Activated T-helper 1 cell treated with anti-CD3 and anti-CD28 coated beads, Interleukin-12 subunit alpha, Interleukin-12 subunit beta, Interleukin-2, Interleukin-4 antibody, amounts not matched to agents 30 ng/mL and 10 ng/mL and 1 ng/mL, durations not matched to agents 14 hours and 24 hours and 36 hours (primary cell): ENCODE measurements at regions of chr13 and their contacts with region 1.

Region 1: GRCh38 chr13:24168392-24168750 is 7.9 kb downstream of the SPATA13 start:
- DNase-seq: no peak
- H3K4me3 Mint-ChIP-seq: no peak overlapping the region
- H3K27ac Mint-ChIP-seq: peak overlapping the region; percentile 77
- H3K4me1 Mint-ChIP-seq: peaks cover 55% of the 10 kb centered on the region
- H3K27me3 Mint-ChIP-seq: peaks cover 4% of the 10 kb centered on the region

Region 2: DNA sequence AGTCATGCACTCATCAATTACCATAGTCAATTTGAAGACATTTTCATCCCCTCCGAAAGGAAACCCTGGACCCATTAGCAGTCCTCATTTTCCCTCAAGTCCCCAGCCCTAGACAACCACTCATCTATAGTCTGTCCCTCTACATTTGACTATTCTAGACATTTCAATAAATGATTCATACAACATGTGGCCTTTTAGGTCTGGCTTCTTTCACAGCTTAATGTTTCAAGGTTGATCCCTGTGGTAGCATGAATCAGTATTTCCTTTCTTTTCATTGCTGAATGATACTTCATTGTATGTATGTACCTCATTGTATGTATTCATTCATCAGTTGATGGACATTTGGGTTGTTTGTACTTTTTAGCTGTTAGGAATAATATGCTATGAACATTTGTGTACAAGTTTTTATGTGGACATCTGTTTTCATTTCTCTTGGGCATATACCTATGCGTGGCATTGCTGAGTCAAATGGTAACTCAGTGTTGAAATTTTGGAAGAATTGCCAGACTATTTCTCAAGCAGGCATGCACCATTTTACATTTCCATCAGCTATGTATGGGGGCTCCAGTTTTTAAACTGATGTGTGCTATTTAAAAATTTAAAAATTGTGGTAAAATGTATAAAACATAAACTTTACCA is 10.6 kb after region 1 on chr13:
- intact Hi-C with region 1: loop called (anchors 1 kb)
- DNase-seq: no peak
- H3K4me3 Mint-ChIP-seq: no peak overlapping the region
- H3K27ac Mint-ChIP-seq: peak overlapping the region; percentile 75
- H3K4me1 Mint-ChIP-seq: peaks cover 39% of the 10 kb centered on the region
- H3K27me3 Mint-ChIP-seq: no peaks in the 10 kb centered on the region